CD14-positive monocyte (primary cell): ENCODE measurements at regions of chr19 and their contacts with region 1.

Region 1: DNA sequence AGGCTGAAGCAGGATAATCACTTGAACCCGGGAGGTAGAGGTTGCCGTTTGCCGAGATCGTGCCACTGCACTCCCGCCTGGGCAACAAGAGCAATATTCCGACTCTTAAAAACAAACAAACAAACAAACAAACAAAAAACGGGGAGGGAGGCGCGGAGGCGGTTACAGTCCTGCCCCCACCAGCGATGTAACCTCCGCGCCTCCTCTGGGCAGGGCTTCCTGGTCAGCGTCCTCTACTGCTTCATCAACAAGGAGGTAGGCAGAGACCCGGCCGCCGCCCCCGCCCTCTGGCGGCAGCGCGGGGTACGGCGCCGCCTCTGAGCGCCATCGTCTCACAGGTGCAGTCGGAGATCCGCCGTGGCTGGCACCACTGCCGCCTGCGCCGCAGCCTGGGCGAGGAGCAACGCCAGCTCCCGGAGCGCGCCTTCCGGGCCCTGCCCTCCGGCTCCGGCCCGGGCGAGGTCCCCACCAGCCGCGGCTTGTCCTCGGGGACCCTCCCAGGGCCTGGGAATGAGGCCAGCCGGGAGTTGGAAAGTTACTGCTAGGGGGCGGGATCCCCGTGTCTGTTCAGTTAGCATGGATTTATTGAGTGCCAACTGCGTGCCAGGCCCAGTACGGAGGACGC is 10.2 kb downstream of the SNRPD2 start:
- DNase-seq: peak; percentile 77 to 83 (median 82)
- H3K4me3 ChIP-seq: peak overlapping the region in 2 of 3 experiments; percentile 16 to 62
- H3K4me3 Mint-ChIP-seq: peak overlapping the region; percentile 76 to 93
- H3K27ac ChIP-seq: no peak overlapping the region
- H3K27ac Mint-ChIP-seq: peak overlapping the region in 3 of 7 donors; percentile 50 to 87 (median 59)
- H3K4me1 ChIP-seq: peaks cover 26 to 27% of the 10 kb centered on the region in 2 donors
- H3K4me1 Mint-ChIP-seq: peaks cover 27% of the 10 kb centered on the region
- H3K27me3 ChIP-seq: peaks cover 13 to 31% of the 10 kb centered on the region in 2 donors
- H3K27me3 Mint-ChIP-seq: peaks cover 39 to 46% (median 40%) of the 10 kb centered on the region in 3 donors
- CTCF ChIP-seq: peak; percentile 99

Region 2: GRCh38 chr19:45496349-45496953 is 185.1 kb before region 1 on chr19:
- intact Hi-C with region 1: loop called in 1 of 2 experiments (anchors 10 kb)
- DNase-seq: peak in 1 of 3 donors; percentile 25
- H3K4me3 ChIP-seq: peak overlapping the region; percentile 44 to 79 (median 47)
- H3K4me3 Mint-ChIP-seq: peak overlapping the region; percentile 71 to 76
- H3K27ac ChIP-seq: no peak overlapping the region
- H3K27ac Mint-ChIP-seq: no peak overlapping the region
- H3K4me1 ChIP-seq: peaks cover 56 to 70% of the 10 kb centered on the region in 2 donors
- H3K4me1 Mint-ChIP-seq: peaks cover 53% of the 10 kb centered on the region
- H3K27me3 ChIP-seq: peaks cover 15 to 46% of the 10 kb centered on the region in 2 donors
- H3K27me3 Mint-ChIP-seq: peaks cover 40 to 78% (median 59%) of the 10 kb centered on the region in 3 donors
- CTCF ChIP-seq: no peak

Region 3: DNA sequence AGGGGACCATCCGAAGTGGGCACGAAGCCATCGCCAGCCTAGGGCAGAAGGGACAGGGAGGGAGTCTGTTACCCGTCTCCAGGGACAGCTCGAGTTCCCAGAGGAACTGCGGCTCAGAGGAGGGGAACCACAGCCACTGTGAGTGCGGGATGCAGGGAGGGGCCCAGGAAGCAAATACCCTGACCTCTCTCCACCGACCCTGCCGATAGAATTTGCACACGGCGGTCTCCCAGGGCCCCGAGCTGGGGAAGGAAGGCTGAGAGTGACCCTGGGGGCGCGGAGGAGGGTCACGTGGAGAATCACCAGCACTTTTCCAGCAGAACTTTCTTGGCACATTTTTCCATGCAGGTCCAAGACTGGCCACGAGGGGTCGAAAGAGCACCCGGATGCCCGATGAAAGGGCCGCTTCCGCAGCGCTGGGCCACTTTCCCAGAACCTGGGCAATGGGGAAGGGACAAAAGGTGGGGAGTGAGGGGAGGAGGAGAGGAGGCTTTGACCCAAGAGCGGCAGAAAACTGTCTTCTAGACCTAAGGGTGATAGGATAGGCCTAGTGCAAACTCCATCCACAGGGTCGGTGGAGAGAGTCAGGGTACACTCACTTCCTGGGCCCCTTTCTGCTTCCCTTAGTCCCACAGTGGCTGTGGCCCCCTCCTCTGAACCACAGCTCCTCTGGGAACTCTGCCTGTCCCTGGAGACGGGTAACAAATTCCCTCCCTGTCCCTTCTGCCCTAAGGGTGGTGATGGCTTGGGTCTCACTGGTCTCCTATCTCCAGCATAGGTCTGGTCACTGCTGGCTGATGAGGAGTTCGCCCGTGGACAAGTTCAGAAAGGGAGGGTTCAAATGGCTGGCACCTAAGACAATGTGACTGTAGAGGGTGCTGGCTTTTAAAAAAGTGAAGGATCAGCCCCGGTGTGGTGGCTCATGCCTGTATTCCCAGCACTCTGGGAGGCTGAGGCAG is 74.2 kb before region 1 on chr19:
- intact Hi-C with region 1: loop called in 1 of 2 experiments (anchors 5 kb)
- DNase-seq: peak; percentile 27 to 63 (median 62)
- H3K4me3 ChIP-seq: no peak overlapping the region
- H3K4me3 Mint-ChIP-seq: peak overlapping the region in 1 of 2 donors; percentile 51
- H3K27ac ChIP-seq: no peak overlapping the region
- H3K27ac Mint-ChIP-seq: peak overlapping the region in 1 of 7 donors; percentile 79
- H3K4me1 ChIP-seq: peaks cover 7 to 8% of the 10 kb centered on the region in 2 donors
- H3K4me1 Mint-ChIP-seq: peaks cover 8% of the 10 kb centered on the region
- H3K27me3 ChIP-seq: peaks cover 7 to 21% of the 10 kb centered on the region in 2 donors
- H3K27me3 Mint-ChIP-seq: peaks cover 22 to 26% (median 23%) of the 10 kb centered on the region in 3 donors
- CTCF ChIP-seq: peak; percentile 87

Region 4: DNA sequence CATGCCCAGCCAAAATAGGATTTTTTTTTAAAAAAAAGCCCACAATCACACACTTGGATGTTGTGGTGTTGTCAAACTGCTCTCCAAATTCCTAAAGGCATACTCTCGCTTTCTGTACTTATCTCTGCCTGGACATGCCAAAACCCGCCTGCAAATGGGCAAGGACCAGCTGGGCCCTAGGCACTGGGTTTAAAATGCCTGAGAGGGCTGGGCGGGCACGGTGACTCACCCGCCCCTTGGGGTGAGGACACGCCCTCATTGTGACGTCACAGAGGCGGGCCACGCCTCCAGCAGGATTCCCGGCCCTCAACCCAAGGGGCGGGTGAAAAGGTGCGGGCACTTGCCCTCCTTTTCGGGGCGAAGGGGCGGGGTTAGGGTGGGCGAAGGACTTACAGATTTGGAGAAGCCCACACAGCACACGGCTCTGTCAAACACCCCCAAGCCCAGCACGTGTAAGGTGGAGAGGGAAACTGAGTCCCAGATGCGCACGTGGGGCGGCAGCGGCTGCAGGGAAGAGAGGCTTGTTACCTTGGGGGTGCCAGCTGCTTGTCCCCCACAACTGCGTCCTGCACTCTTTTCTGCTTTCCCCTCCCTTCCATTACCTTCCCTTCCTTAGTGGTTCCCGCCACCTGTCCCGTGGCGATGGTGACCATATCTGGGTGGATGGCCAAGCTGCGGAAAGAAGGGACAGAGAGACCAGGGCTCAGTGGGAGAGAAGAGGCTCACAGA is 48.9 kb before region 1 on chr19:
- intact Hi-C with region 1: no loop called
- DNase-seq: peak; percentile 21 to 69 (median 37)
- H3K4me3 ChIP-seq: no peak overlapping the region
- H3K4me3 Mint-ChIP-seq: no peak overlapping the region
- H3K27ac ChIP-seq: no peak overlapping the region
- H3K27ac Mint-ChIP-seq: peak overlapping the region in 2 of 7 donors; percentile 19 to 25
- H3K4me1 ChIP-seq: no peaks in the 10 kb centered on the region
- H3K4me1 Mint-ChIP-seq: no peaks in the 10 kb centered on the region
- H3K27me3 ChIP-seq: no peaks in the 10 kb centered on the region
- H3K27me3 Mint-ChIP-seq: peaks cover 0 to 2% (median 0%) of the 10 kb centered on the region in 3 donors
- CTCF ChIP-seq: no peak

Region 5: GRCh38 chr19:45753546-45753945 is 72.0 kb after region 1 on chr19:
- intact Hi-C with region 1: no loop called
- DNase-seq: no peak
- H3K4me3 ChIP-seq: no peak overlapping the region
- H3K4me3 Mint-ChIP-seq: no peak overlapping the region
- H3K27ac ChIP-seq: no peak overlapping the region
- H3K27ac Mint-ChIP-seq: no peak overlapping the region
- H3K4me1 ChIP-seq: no peaks in the 10 kb centered on the region
- H3K4me1 Mint-ChIP-seq: no peaks in the 10 kb centered on the region
- H3K27me3 ChIP-seq: peaks cover 0 to 3% of the 10 kb centered on the region in 2 donors
- H3K27me3 Mint-ChIP-seq: peaks cover 27 to 43% (median 39%) of the 10 kb centered on the region in 3 donors
- CTCF ChIP-seq: no peak